ENCODE measurements at regions of chr21 and their contacts with region 1.

Region 1: DNA sequence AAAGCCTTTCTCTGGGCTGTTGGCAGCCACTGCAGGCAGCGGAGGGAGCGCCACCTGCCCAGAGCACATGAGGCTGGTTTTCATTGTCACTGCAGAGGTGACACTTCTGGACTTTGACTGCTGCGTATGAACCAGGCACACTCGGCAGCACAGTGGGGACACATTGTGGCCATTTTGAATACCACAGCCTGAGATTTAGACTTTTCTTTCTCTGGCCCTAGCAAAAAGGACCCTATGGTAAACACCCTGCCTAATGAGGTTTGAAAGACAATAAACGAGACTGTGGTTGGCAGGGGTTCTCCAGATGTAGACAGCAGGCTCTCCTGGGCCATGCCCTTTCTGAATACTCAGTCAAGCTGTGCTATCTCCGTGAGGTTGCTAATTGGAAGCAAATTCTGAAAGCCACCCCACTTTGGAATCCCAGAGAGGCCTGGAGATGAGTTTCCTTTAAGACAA is 12.0 kb upstream of the KCNE2 start:
- DNase-seq: peak; percentile 69
- CTCF ChIP-seq: peak; percentile 53

Region 2: GRCh38 chr21:33894736-33895288 is 457.0 kb before region 1 on chr21:
- CTCF ChIA-PET with region 1: interaction called, 11 read pairs
- POLR2A ChIA-PET with region 1: no interaction called
- DNase-seq: peak; percentile 72
- CTCF ChIP-seq: peak; percentile 57

Region 3: DNA sequence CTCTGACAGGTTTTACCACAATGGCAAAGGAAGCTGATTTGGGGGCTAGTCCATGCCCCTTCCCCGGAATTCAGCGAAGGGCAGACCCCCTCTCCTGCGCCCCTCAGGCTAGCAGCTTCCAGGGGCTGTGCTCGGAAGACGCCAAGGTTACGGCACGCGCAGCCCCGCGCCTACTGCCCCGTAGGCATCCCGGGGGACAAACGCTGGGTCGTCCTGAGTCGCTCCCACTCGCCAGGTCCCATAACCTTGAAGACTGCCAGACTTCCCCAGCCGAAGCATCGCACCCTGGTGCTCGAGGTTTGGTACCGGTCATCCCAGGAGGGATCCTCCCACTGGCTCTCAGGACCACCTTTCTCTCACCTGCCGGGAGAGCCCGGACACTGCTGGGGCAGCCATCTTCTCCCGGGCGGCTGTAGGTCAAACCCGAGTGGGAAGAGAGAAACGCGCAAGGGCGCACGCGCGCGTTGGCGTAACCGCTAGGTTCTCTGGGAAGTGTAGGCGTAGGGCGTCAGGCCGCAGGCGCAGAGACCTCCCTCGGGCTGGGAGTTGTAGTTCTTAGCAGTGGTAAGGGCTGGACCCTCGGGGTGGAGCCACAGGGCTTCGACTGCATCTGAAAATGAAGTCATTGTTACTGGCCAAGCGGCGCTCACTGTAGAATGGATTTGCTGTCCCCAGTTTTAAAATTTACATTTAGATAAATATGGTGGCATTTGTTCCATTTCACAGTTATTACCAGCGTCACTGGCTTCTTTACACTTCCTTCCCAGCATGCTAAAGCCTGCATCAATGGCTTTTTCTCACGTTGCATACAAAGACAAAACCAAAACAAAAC is 436.2 kb before region 1 on chr21 and contains the start of gene ATP5PO:
- CTCF ChIA-PET with region 1: interaction called, 368 read pairs
- POLR2A ChIA-PET with region 1: no interaction called
- DNase-seq: peak; percentile 95
- CTCF ChIP-seq: no peak

Region 4: DNA sequence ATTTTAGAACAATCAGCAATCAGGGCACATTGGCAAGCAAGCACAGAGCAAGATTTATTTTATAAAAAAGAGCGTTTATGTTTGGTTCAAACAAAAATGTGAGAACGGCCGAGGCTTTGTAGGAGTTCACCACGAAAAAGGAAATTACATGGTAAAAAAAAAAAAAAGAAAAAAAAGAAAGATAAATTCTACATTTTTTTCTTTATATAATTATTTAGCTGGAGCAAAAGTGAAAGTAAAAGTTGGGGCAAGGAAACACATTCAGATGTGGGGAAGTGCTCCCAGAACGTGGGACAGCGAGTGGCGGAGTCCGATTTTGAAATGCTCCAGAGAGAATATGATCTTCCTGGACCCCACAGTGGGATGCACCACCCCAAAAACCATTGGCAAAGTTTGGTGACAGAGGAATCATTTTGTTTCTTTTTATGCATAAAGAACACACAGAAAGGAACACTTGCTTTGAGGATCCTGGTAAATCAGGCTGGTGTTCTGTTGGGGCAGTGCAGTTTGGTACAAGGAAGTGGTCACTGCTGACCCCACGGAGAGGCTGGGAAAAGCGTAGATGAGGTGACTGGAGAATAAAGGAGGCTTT is 419.9 kb before region 1 on chr21:
- CTCF ChIA-PET with region 1: interaction called, 25 read pairs
- POLR2A ChIA-PET with region 1: no interaction called
- DNase-seq: no peak
- CTCF ChIP-seq: no peak

Region 5: DNA sequence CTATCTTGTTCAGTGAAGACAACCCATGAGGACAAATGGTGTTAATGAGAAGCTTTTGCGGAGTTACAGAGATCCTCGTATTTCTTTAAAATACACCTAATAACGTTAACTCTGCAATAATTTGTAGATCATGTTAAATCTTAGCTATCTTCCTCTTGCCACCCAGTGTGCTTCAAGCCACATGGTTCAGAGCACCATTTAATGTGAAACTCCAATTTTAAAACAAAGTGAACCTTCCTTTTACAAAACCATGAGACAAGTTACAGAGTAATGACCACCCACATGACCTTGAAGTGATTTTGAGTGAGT is 10.3 kb after region 1 on chr21:
- CTCF ChIA-PET with region 1: interaction called, 58 read pairs
- POLR2A ChIA-PET with region 1: no interaction called
- DNase-seq: no peak
- CTCF ChIP-seq: no peak

Measured in GM10248 (cell line).